ENCODE measurements at regions of chr2 and their contacts with region 1.

Region 1: GRCh38 chr2:40370007-40370395 is 81.9 kb downstream of the SLC8A1 start:
- DNase-seq: no peak
- H3K4me3 ChIP-seq: no peak overlapping the region
- H3K27ac ChIP-seq: no peak overlapping the region
- H3K4me1 ChIP-seq: no peaks in the 10 kb centered on the region
- H3K27me3 ChIP-seq: no peaks in the 10 kb centered on the region
- CTCF ChIP-seq: no peak

Region 2: GRCh38 chr2:40113272-40113968 is 256.6 kb before region 1 on chr2:
- CTCF ChIA-PET with region 1: interaction called, 20 read pairs
- POLR2A ChIA-PET with region 1: no interaction called
- intact Hi-C with region 1: no loop called
- DNase-seq: no peak
- H3K4me3 ChIP-seq: no peak overlapping the region
- H3K27ac ChIP-seq: no peak overlapping the region
- H3K4me1 ChIP-seq: no peaks in the 10 kb centered on the region
- H3K27me3 ChIP-seq: no peaks in the 10 kb centered on the region
- CTCF ChIP-seq: no peak